ENCODE measurements at regions of chr15 and their contacts with region 1.

Region 1: GRCh38 chr15:80660122-80660521 is 35.0 kb upstream of the ABHD17C start:
- DNase-seq: peak; percentile 53
- ATAC-seq: peak; percentile 98
- H3K4me3 Mint-ChIP-seq: no peak overlapping the region
- H3K27ac Mint-ChIP-seq: no peak overlapping the region
- H3K4me1 Mint-ChIP-seq: peaks cover 5% of the 10 kb centered on the region; the same call in 1 of the 2 replicates
- H3K27me3 Mint-ChIP-seq: no peaks in the 10 kb centered on the region
- CTCF ChIP-seq: peak; percentile 48; the same call in 1 of the 2 replicates

Region 2: DNA sequence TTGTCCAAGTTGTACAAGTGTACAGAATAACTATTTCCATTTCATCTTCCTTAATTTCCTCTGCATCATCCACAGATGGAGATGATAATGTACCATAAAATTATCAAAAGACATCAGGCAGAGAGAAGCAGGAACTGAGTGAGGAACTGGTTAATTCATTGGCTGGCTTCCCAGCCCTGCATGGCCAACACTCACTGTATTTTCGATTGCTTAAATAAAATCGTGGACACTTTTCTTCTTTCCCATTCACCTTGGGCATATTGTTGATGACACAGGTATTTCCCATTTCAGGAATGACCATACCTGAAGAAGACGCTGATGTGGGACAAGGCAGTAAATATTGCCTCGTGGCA is 109.2 kb before region 1 on chr15:
- CTCF ChIA-PET with region 1: no interaction called
- POLR2A ChIA-PET with region 1: no interaction called
- DNase-seq: no peak
- ATAC-seq: no peak
- H3K4me3 Mint-ChIP-seq: no peak overlapping the region
- H3K27ac Mint-ChIP-seq: no peak overlapping the region
- H3K4me1 Mint-ChIP-seq: no peaks in the 10 kb centered on the region
- H3K27me3 Mint-ChIP-seq: no peaks in the 10 kb centered on the region
- CTCF ChIP-seq: no peak

Region 3: DNA sequence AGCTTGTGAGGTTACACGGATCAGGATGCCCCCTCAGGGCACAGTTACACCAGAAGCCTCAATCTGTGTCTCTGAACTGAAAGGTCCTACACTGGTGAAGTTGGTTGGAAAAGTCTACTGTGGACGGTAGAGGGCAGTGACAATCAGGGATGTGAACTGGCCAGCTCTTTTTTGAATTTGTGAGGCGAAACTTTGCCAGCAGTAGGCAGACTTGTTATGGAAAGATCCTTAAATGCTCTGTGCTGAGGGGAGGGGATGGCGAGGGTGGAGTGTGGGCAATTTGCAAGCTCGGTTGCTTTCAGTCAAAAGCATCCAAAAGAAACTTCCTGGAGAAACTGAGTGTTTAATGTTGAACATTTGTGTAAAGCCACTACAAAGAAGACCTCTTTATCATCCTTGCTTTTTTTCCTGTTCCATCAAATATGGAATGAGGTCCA is 92.4 kb before region 1 on chr15:
- CTCF ChIA-PET with region 1: interaction called, 21 read pairs
- POLR2A ChIA-PET with region 1: no interaction called
- DNase-seq: peak; percentile 52
- ATAC-seq: peak; percentile 90
- H3K4me3 Mint-ChIP-seq: no peak overlapping the region
- H3K27ac Mint-ChIP-seq: no peak overlapping the region
- H3K4me1 Mint-ChIP-seq: peaks cover 22% of the 10 kb centered on the region
- H3K27me3 Mint-ChIP-seq: no peaks in the 10 kb centered on the region; the same call in 1 of the 2 replicates
- CTCF ChIP-seq: no peak; the same call in 1 of the 2 replicates

Region 4: DNA sequence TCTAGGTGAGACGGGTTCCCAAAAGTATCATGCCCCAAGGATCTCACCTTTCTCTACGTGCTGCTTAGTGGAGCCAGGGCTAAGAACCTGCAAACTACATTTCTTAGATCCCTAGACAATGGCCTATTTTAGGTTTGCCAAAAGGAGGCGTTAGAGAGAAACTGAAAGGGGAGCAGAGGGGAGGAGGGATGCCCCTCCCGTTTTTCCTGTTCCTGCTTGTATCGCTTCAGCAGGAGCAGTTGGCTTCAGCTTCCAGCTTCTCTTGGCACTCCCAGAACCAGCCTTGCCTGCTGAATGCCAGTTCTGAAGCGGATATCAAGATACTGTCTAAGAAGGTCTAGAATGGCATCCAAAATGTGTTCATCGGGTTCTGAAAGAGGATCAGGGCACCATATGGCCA is 23.4 kb before region 1 on chr15:
- CTCF ChIA-PET with region 1: interaction called, 13 read pairs
- POLR2A ChIA-PET with region 1: no interaction called
- DNase-seq: peak; percentile 31
- ATAC-seq: peak; percentile 92
- H3K4me3 Mint-ChIP-seq: no peak overlapping the region
- H3K27ac Mint-ChIP-seq: no peak overlapping the region
- H3K4me1 Mint-ChIP-seq: no peaks in the 10 kb centered on the region
- H3K27me3 Mint-ChIP-seq: peaks cover 4% of the 10 kb centered on the region; the same call in 1 of the 2 replicates
- CTCF ChIP-seq: no peak

Region 5: DNA sequence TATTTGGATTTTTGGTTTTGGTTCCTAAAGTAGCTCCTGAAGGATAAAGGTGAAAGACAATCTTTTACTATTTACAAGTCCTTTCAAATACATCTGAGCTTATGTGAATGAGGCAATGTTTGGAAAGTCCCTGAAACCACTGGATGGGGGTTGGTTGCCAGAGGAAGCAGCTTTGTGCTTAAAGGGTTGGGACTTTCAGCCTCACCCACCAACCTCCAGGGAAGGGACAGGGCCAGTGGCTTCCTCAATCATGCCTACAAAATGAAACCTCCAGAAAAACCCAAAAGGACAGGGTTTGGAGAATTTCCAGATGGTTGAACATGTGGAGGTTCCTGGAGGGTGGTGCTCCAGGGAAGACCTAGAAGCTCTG is 14.1 kb after region 1 on chr15:
- CTCF ChIA-PET with region 1: interaction called, 18 read pairs
- POLR2A ChIA-PET with region 1: no interaction called
- DNase-seq: no peak
- ATAC-seq: no peak
- H3K4me3 Mint-ChIP-seq: no peak overlapping the region
- H3K27ac Mint-ChIP-seq: no peak overlapping the region
- H3K4me1 Mint-ChIP-seq: peaks cover 3% of the 10 kb centered on the region; the same call in 1 of the 2 replicates
- H3K27me3 Mint-ChIP-seq: peaks cover 6% of the 10 kb centered on the region; the same call in 1 of the 2 replicates
- CTCF ChIP-seq: no peak

Region 6: DNA sequence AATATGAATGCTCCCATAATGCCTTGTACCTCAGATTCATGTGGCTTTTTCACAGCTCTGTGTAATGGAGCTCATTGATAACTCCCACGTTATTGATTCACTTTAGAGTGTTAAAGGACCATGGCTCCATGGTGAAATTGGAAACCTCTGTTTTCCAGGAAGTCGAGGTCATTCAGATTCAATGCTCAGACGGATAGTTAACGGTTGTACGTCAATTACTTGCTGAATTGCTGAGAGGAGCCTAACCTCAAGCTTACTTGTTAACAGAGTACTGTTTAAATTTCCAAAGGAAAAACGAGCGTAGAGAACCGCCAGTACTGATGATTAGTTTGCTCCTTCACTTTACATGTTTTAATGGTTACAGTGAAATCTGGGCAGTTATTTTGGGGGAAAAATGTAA is 46.0 kb after region 1 on chr15:
- CTCF ChIA-PET with region 1: interaction called, 15 read pairs
- POLR2A ChIA-PET with region 1: no interaction called
- DNase-seq: no peak
- ATAC-seq: peak; percentile 53
- H3K4me3 Mint-ChIP-seq: peak overlapping the region; percentile 49
- H3K27ac Mint-ChIP-seq: peak overlapping the region; percentile 85
- H3K4me1 Mint-ChIP-seq: peaks cover 58% of the 10 kb centered on the region
- H3K27me3 Mint-ChIP-seq: no peaks in the 10 kb centered on the region
- CTCF ChIP-seq: no peak

Region 7: GRCh38 chr15:80755885-80756284 is 95.8 kb after region 1 on chr15:
- CTCF ChIA-PET with region 1: interaction called, 10 read pairs
- POLR2A ChIA-PET with region 1: no interaction called
- DNase-seq: no peak
- ATAC-seq: no peak
- H3K4me3 Mint-ChIP-seq: no peak overlapping the region
- H3K27ac Mint-ChIP-seq: 0 out of 2 replicates have a peak overlapping the region, but pooled peaks have one; percentile 37
- H3K4me1 Mint-ChIP-seq: peaks cover 17% of the 10 kb centered on the region
- H3K27me3 Mint-ChIP-seq: no peaks in the 10 kb centered on the region
- CTCF ChIP-seq: no peak

Region 8: DNA sequence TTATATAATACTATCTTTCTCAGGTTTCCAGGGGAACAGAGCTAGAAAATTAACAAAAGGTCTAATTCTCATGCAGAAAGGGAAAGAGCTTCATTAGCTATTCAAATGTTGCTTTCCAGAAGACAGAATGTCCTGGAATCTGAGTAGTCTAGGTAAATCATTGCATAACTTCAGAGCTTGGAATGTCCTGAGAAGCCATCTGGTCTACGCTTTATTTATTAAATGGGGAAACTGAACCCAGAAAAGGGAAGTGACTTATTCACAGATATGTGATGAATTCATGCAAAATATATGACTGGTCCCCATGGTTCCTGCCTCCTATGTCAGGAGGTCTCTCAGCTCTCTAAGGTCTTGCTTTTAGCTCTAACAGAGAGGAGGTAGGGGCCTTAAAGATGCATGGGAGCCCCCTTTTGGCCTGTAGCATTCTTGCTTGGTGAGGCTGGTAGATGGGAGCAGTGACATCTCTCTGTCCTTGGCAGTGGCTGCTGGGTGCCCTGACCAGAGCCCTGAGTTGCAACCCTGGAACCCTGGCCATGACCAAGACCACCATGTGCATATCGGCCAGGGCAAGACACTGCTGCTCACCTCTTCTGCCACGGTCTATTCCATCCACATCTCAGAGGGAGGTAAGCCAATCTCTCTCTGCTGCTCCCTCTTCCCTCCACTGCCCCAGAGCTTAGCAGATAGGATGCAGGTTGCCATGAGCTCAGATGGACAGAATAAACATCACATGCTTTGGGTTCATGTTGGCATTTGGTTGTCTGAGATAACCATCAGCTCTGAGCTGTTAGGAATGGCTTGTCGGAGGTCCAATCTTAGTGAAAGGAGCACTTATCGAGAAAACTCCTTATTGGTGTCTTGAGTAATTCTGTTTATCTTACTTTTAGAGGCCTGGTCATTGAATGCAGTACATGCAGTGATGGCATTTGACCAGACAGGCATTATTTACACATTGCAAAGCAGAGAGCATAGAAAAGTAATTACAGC is 218.4 kb after region 1 on chr15:
- CTCF ChIA-PET with region 1: interaction called, 10 read pairs
- POLR2A ChIA-PET with region 1: no interaction called
- DNase-seq: no peak
- ATAC-seq: peak; percentile 65
- H3K4me3 Mint-ChIP-seq: no peak overlapping the region
- H3K27ac Mint-ChIP-seq: no peak overlapping the region
- H3K4me1 Mint-ChIP-seq: peaks cover 19% of the 10 kb centered on the region
- H3K27me3 Mint-ChIP-seq: peaks cover 3% of the 10 kb centered on the region; the same call in 1 of the 2 replicates
- CTCF ChIP-seq: no peak